MCF 10A (cell line): ENCODE measurements at regions of chr2 and their contacts with region 1.

Region 1: GRCh38 chr2:169877398-169877797 is 50.1 kb downstream of the UBR3 start:
- DNase-seq: peak; percentile 18
- H3K4me3 Mint-ChIP-seq: no peak overlapping the region
- H3K27ac Mint-ChIP-seq: no peak overlapping the region
- H3K4me1 Mint-ChIP-seq: no peaks in the 10 kb centered on the region
- H3K27me3 Mint-ChIP-seq: no peaks in the 10 kb centered on the region
- CTCF ChIP-seq: peak; percentile 30

Region 2: GRCh38 chr2:169528271-169528701 is 349.1 kb before region 1 on chr2:
- CTCF ChIA-PET with region 1: no interaction called
- POLR2A ChIA-PET with region 1: no interaction called
- intact Hi-C with region 1: loop called (anchors 1 kb)
- DNase-seq: peak; percentile 70
- H3K4me3 Mint-ChIP-seq: no peak overlapping the region
- H3K27ac Mint-ChIP-seq: no peak overlapping the region
- H3K4me1 Mint-ChIP-seq: no peaks in the 10 kb centered on the region
- H3K27me3 Mint-ChIP-seq: no peaks in the 10 kb centered on the region
- CTCF ChIP-seq: peak; percentile 72

Region 3: DNA sequence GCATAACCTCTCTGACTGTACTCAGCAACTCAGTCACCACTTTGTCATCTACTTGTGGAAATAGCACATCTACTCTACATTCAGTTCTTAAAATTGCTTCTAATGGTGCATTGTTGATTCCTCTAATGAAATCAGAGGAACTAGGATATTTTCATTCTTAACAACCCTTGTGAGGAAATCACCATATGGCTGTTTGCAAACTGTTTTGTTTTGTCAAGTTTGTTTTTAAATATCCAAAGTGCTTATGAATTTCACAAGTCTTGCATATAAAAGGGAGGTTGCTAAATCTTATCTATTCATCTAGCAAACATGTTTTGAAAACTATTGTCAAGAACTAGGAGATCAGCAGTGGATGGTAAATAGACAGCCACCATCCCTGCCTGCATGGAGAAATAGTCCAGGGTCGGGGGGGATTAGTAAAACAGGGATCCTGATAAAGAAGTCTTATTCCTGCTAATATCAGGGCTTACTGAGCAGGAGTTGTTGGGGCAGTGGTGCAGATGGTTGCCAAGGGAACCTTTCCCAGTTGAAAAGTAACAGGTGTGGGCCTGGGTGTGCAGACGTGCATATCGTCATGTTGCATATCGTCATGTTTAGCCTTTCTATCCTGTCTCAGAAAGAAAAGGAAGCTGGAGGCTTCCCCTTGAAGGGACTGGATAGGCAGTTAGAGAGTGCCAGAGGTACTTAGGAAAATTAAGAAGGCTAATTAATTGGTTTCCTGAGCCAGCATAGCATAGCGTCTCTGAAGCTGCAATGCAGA is 293.1 kb after region 1 on chr2:
- CTCF ChIA-PET with region 1: no interaction called
- POLR2A ChIA-PET with region 1: no interaction called
- intact Hi-C with region 1: no loop called
- DNase-seq: no peak
- H3K4me3 Mint-ChIP-seq: no peak overlapping the region
- H3K27ac Mint-ChIP-seq: no peak overlapping the region
- H3K4me1 Mint-ChIP-seq: peaks cover under 1% of the 10 kb centered on the region
- H3K27me3 Mint-ChIP-seq: no peaks in the 10 kb centered on the region
- CTCF ChIP-seq: no peak